GM23248 (cell line): ENCODE measurements at regions of chr6 and their contacts with region 1.

Region 1: DNA sequence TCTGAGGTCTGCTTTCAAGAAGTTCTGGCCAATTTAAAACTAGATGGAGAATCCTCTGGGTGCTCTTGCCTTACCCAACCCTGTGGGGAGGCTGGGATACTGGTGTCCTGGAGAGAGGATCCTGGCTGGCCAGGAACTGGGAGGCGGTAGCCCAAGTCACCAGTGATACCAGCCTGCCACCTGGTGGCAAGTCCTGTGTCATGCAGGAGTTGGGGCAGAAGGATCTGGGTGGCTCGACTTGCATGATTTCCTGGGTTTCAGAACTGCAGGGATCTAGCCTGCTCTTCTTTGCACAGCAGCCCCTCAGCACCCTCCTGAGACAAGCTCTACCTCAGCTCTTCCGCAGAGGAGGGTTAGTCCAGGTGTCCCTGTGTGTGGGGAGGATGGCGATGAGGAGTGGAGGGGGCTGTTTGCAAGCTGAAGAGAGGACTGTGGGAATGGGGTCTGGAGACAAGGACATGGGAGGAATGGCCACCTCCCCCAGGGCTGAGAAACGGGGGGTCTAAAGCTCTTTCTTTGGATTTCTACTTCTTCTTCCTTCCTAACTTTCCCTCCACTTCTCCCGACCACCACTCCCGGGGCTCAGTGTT is 4.2 kb downstream of the KCNK17 start:
- DNase-seq: peak; percentile 82
- H3K4me3 ChIP-seq: no peak overlapping the region
- H3K27ac ChIP-seq: no peak overlapping the region
- H3K4me1 ChIP-seq: no peaks in the 10 kb centered on the region
- H3K27me3 ChIP-seq: peaks cover 30% of the 10 kb centered on the region

Region 2: DNA sequence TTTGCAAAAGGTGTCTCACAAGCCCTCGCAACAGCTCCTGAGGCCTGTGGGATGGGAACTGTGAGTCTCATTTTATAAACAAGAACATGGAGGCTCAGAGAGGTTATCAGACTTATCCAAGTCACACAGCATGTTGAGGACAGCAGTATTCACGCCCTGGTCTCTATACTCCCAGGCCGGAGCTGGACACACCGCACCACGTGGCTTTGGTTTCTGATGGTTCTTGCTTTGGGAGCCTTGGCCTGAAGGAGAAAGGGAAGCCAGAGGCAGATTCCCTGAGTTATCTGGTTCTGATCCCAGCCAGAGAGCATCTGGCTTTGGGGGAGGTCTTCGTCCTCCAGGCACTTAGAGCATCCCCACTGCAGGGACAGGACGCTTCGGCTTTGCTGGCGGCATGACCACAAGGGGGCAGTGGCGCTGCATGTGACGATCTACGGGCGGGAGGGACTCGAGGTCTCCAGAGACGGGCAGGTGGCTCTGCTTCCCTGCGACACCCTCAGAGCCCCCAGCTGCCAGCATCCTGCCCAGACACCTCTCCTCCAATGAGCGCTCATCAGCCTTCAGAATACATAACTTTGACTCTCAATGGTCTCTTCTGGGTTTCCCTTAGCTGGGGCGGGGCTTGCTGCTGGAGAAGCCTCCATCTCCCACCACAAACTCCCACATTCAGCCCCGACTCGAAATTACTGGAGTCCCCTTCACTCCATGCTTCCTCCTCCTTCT is 143.7 kb before region 1 on chr6:
- in situ Hi-C with region 1: loop called (anchors 5 kb)
- DNase-seq: peak; percentile 72
- H3K4me3 ChIP-seq: no peak overlapping the region
- H3K27ac ChIP-seq: no peak overlapping the region
- H3K4me1 ChIP-seq: no peaks in the 10 kb centered on the region
- H3K27me3 ChIP-seq: no peaks in the 10 kb centered on the region; the same call in 1 of the 2 replicates

Region 3: GRCh38 chr6:39432330-39433021 is 122.4 kb after region 1 on chr6:
- in situ Hi-C with region 1: no loop called
- DNase-seq: peak; percentile 85
- H3K4me3 ChIP-seq: peak overlapping the region; percentile 31; the same call in 1 of the 2 replicates
- H3K27ac ChIP-seq: peak overlapping the region; percentile 73
- H3K4me1 ChIP-seq: peaks cover 27% of the 10 kb centered on the region
- H3K27me3 ChIP-seq: no peaks in the 10 kb centered on the region